ENCODE measurements at regions of chr3 and their contacts with region 1.

Region 1: DNA sequence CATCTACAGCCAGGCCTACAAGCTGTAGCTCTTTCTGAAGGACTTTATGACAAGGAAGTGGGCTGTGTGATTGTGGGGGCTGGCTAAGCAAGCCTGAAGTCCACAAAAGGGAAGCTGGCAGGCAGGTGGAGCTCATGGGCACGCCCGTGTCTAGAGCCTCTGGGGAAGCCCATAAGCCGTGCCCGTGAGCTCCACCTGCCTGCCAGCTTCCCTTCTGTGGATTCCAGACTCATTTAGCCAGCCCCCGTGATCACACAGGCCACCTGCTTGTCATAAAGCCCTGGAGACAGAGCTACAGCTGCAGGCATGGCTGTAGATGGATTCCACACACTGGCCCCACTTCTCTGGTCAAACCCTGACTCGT is 15.2 kb downstream of the EFCC1 start:
- DNase-seq: peak; percentile 92
- ATAC-seq: peak; percentile 86
- H3K4me3 ChIP-seq: peak overlapping the region in 3 of 5 experiments; percentile 5 to 28 (median 18)
- H3K4me3 Mint-ChIP-seq: peak overlapping the region; percentile 79
- H3K27ac ChIP-seq: peak overlapping the region; percentile 85 to 96
- H3K27ac Mint-ChIP-seq: peak overlapping the region; percentile 97
- H3K4me1 ChIP-seq: peaks cover 33 to 35% of the 10 kb centered on the region in 2 donors
- H3K4me1 Mint-ChIP-seq: peaks cover 41% of the 10 kb centered on the region
- H3K27me3 ChIP-seq: no peaks in the 10 kb centered on the region
- H3K27me3 Mint-ChIP-seq: no peaks in the 10 kb centered on the region
- CTCF ChIP-seq: peak; percentile 41

Region 2: GRCh38 chr3:128993461-128994173 is 22.7 kb before region 1 on chr3 and contains the start of gene CFAP92:
- CTCF ChIA-PET with region 1: interaction called, 20 read pairs
- POLR2A ChIA-PET with region 1: interaction called, 5 read pairs
- intact Hi-C with region 1: loop called (anchors 1 kb)
- DNase-seq: peak; percentile 92
- ATAC-seq: peak; percentile 99
- H3K4me3 ChIP-seq: peak within 1 kb of the TSS; percentile 19 to 55 (median 44)
- H3K4me3 Mint-ChIP-seq: peak within 1 kb of the TSS; percentile 73
- H3K27ac ChIP-seq: peak within 1 kb of the TSS in 1 of 2 donors; percentile 9
- H3K27ac Mint-ChIP-seq: peak within 1 kb of the TSS; percentile 61
- H3K4me1 ChIP-seq: peaks cover 20 to 27% of the 10 kb centered on the region in 2 donors
- H3K4me1 Mint-ChIP-seq: peaks cover 16% of the 10 kb centered on the region
- H3K27me3 ChIP-seq: peaks cover 0 to 30% (median 9%) of the 10 kb centered on the region in 4 experiments
- H3K27me3 Mint-ChIP-seq: peaks cover 14% of the 10 kb centered on the region
- CTCF ChIP-seq: no peak
- total RNA-seq, gene CFAP92: not detected in 2 replicates

Region 3: DNA sequence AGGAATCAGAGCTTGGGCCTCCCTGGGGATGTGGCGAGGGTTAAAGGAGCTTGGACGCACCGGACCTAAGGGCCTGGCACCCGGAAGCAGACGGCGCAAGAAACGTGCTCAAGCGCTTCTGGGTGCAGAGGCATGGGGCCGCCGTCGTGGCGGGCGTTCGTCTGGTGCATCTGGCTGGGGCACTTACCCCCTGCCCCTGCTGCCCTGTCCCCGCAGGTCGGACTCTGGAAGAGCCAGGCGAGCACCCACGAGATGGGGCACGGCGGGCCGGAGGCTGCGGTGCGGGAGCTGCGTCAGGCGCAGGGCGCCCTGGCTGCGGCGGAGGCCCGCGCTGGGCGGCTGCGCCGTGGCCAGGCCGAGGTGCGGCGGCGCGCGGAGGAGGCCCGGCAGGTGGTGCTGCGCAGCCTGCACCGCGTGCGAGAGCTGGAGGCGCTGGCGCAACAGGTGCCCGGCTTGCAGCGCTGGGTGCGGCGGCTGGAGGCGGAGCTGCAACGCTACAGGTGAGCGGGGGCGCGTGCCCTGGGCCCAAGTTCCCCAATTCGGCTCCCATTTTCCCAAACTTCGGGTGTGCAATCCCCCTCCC is 12.7 kb before region 1 on chr3:
- CTCF ChIA-PET with region 1: interaction called, 15 read pairs
- POLR2A ChIA-PET with region 1: interaction called, 5 read pairs
- intact Hi-C with region 1: no loop called
- DNase-seq: peak; percentile 73
- ATAC-seq: peak; percentile 75
- H3K4me3 ChIP-seq: no peak overlapping the region
- H3K4me3 Mint-ChIP-seq: peak overlapping the region; percentile 80
- H3K27ac ChIP-seq: no peak overlapping the region
- H3K27ac Mint-ChIP-seq: no peak overlapping the region
- H3K4me1 ChIP-seq: peaks cover 32% of the 10 kb centered on the region in 2 donors
- H3K4me1 Mint-ChIP-seq: peaks cover 23% of the 10 kb centered on the region
- H3K27me3 ChIP-seq: peaks cover 0 to 63% (median 33%) of the 10 kb centered on the region in 4 experiments
- H3K27me3 Mint-ChIP-seq: peaks cover 57% of the 10 kb centered on the region
- CTCF ChIP-seq: peak; percentile 20

Region 4: DNA sequence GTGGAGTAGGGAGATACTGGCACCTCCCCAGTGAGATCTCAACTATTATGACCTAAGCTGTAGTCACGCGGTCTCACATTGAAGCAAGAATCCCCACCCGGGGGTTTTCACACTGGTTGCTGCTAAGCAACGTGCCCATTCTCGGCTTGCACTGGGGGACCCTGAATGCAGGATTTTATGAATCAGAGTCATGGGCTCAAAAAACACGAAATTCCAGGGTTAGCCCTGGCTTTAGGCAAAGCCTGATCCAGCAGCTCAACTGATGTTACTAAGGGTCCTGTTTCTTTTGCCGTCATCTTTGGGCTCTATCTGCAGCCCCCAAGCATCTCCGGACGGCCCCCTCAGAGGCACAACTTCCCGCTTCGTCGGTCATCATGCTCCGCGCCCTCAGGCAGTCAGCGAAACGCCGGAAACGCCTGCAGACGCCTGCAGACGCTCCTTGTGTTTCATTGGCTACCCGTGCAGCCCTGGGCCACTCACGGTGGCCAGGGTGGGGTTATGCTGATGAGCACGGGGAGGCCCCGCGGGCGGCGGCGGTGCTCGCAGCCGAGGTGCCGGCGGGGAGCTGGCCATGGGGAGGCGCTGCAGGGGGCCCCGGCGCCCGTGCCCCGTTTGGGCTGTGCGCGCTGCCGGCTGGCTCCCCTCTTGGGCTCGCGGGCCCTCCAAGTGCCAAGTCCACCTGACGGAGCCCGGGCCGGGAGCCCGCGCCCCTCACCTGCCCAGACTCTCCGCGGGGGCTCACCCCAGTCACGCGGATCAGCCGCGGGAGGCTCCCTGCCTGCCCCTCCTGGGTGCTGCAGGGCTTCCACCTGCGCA is 10.6 kb after region 1 on chr3:
- CTCF ChIA-PET with region 1: interaction called, 53 read pairs
- POLR2A ChIA-PET with region 1: interaction called, 19 read pairs
- intact Hi-C with region 1: loop called (anchors 1 kb)
- DNase-seq: peak; percentile 95
- ATAC-seq: peak; percentile 98
- H3K4me3 ChIP-seq: peak overlapping the region; percentile 30 to 71 (median 61)
- H3K4me3 Mint-ChIP-seq: peak overlapping the region; percentile 91
- H3K27ac ChIP-seq: peak overlapping the region; percentile 74 to 83
- H3K27ac Mint-ChIP-seq: peak overlapping the region; percentile 95
- H3K4me1 ChIP-seq: peaks cover 13 to 15% of the 10 kb centered on the region in 2 donors
- H3K4me1 Mint-ChIP-seq: peaks cover 22% of the 10 kb centered on the region
- H3K27me3 ChIP-seq: peaks cover 0 to 6% (median 0%) of the 10 kb centered on the region in 4 experiments
- H3K27me3 Mint-ChIP-seq: peaks cover 3% of the 10 kb centered on the region
- CTCF ChIP-seq: peak; percentile 91

Region 5: DNA sequence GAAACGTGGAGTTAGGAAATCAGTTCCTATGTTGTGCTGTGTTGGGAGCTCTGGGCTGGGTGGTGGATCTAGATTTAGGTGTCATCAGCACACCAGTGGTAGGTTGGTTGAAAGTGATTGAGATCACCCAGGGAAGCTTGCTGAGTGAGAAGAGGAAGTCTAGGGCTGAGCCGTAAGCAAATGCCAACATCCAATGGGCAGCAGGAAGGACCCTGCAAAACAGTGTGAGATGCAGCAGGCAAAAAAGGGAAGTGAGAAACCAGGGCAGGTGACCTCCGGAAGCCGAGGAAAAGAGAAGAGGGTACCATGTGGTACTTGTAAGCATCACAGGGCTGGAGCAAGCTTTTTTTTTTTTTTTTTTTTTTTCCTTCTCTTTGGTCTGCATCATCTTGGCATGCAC is 217.2 kb after region 1 on chr3:
- CTCF ChIA-PET with region 1: no interaction called
- POLR2A ChIA-PET with region 1: no interaction called
- intact Hi-C with region 1: loop called (anchors 1 kb)
- DNase-seq: peak; percentile 95
- ATAC-seq: peak; percentile 94
- H3K4me3 ChIP-seq: no peak overlapping the region
- H3K4me3 Mint-ChIP-seq: peak overlapping the region; percentile 50
- H3K27ac ChIP-seq: peak overlapping the region; percentile 71 to 87
- H3K27ac Mint-ChIP-seq: peak overlapping the region; percentile 97
- H3K4me1 ChIP-seq: peaks cover 28 to 36% of the 10 kb centered on the region in 2 donors
- H3K4me1 Mint-ChIP-seq: peaks cover 47% of the 10 kb centered on the region
- H3K27me3 ChIP-seq: no peaks in the 10 kb centered on the region
- H3K27me3 Mint-ChIP-seq: no peaks in the 10 kb centered on the region
- CTCF ChIP-seq: no peak

Measured in B cell (primary cell).